OCI-LY7 (cell line): ENCODE measurements at regions of chr7 and their contacts with region 1.

Region 1: DNA sequence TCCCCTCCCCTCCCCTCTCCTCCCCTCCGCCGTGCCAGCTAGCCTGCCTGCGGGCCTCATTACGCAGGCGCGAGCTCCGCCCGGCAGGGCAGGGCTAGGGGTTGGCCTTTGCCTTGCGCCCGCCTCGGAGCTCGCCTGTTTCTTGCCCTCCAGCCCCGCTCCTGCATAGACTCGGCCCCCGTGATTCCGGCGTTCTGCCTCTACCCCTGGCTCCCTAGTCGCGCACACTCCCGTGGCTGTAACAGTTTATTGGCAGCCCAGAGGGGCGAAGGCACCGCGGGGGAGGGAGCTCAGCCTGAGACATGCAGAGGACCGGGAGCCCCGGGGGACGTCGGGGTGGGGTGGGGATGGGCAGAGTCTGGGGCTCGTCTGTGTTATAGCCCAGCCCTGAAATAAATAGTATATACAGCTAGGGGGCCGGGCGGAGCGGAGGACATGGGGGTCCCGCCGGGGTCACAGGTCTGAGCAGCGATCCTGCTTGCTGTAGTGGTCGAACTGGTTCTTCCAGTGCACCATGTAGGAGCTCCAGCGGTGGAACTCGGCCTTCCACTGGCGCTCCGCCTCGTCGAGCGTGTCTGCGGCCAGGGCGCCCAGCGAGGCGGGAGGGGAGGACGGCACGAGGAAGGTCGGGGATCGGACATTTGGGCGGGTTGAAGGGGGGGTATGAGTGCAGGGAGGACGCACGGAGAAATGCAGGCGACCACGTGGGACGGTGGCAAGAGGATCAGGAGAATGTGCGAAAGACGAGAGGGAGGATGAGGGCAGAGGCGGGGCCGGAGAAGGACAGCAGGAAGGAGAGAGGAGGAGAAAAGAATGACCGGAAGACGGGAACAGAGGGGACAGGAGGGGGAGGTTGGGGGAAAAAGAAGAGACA is 483 bp upstream of the UFSP1 start:
- DNase-seq: peak; percentile 94
- H3K4me3 ChIP-seq: peak overlapping the region; percentile 61
- H3K27ac ChIP-seq: peak overlapping the region; percentile 30
- H3K4me1 ChIP-seq: peaks cover 43% of the 10 kb centered on the region
- CTCF ChIP-seq: no peak

Region 2: DNA sequence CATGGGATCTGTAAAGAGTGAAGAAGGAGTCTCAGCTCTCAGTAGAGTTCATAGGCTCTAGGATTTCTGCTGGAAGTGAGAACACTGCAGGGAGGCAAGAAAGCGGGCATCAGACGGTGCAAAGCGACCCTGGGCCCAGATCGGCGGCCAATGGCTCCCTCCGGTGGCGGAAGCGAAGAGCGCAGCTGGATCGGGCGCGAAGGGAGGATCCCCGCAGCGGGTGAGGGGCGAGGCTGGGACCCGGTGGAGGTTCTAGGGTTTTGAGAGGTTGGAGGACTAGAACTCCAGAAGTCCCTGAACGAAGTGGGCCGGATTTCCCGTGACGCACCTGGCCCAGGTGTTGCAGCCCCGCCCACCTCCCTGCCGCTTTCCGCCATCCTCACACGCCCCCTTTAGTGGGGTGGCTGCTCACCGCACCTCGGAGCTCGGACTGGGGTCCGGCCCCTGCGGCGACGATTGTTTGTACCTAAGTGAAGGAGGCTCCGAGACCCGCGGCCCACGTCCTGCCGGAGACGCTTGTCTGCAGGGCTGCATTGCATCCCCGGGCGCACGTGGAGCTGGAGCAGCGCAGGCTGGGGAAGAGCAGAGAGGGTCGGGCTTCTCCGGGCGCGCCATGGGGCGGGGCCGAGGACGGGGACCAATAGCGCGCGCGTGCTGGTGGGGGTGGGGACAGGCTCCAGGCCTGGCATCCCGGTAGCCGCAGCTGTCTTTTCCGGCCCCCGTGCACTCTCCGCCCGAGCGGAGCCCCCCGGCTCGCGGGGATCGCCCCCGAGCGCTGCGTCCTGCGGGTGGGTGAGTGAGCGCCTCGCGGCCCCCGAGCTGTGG is 37.7 kb before region 1 on chr7 and contains the start of gene SLC12A9:
- CTCF ChIA-PET with region 1: interaction called, 5 read pairs
- POLR2A ChIA-PET with region 1: interaction called, 3 read pairs
- intact Hi-C with region 1: loop called (anchors 1 kb)
- DNase-seq: peak; percentile 90
- H3K4me3 ChIP-seq: peak within 1 kb of the TSS; percentile 85
- H3K27ac ChIP-seq: peak within 1 kb of the TSS; percentile 45
- H3K4me1 ChIP-seq: peaks cover 15% of the 10 kb centered on the region
- CTCF ChIP-seq: peak; percentile 95
- total RNA-seq, gene SLC12A9: 15.7 and 17.0 TPM in 2 replicates

Region 3: GRCh38 chr7:101031082-101031481 is 141.1 kb after region 1 on chr7:
- CTCF ChIA-PET with region 1: interaction called, 14 read pairs
- POLR2A ChIA-PET with region 1: no interaction called
- intact Hi-C with region 1: no loop called
- DNase-seq: no peak
- H3K4me3 ChIP-seq: no peak overlapping the region
- H3K27ac ChIP-seq: no peak overlapping the region
- H3K4me1 ChIP-seq: no peaks in the 10 kb centered on the region
- CTCF ChIP-seq: no peak

Region 4: DNA sequence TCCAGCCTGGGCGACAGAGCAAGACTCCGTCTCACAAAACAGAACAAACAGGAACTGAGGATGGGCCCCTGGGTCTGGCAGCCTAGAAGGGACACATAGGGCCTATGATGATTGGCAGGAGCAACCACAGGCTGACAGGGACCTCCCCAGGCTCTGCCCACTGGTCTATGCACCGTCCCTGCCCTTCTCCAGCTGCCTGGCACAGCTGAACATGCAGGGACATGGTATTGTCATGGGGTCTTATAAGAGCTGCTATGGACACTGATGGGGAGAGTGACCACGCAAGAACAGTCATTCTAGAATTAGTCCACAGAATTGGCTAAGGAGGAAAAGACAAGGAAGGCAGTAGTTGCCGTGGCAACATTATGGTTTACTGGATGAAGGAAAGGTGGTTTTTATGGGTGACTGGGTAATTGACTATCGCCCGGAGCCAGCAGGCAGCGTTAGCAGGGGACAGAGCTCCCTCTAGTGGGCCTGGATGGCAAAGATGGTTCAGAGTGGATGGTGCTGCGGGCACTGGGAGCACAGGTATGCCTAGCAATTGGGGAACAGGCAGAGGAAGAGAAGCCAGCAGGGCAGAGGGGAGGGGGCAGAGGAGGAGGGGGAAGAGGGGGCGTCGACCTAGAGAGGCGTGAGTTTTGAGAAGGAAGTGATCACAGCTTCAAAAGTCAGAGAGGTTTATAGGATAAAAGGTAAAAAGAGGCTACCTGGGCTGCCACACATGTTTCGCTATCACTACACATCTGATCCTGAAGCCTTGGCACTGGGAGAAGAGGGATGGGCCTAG is 187.5 kb after region 1 on chr7:
- CTCF ChIA-PET with region 1: interaction called, 4 read pairs
- POLR2A ChIA-PET with region 1: no interaction called
- intact Hi-C with region 1: loop called (anchors 5 kb)
- DNase-seq: peak; percentile 77
- H3K4me3 ChIP-seq: no peak overlapping the region
- H3K27ac ChIP-seq: no peak overlapping the region
- H3K4me1 ChIP-seq: peaks cover 3% of the 10 kb centered on the region
- CTCF ChIP-seq: peak; percentile 95

Region 5: GRCh38 chr7:101128040-101128794 is 238.2 kb after region 1 on chr7:
- CTCF ChIA-PET with region 1: no interaction called
- POLR2A ChIA-PET with region 1: no interaction called
- intact Hi-C with region 1: no loop called
- DNase-seq: no peak
- H3K4me3 ChIP-seq: no peak overlapping the region
- H3K27ac ChIP-seq: no peak overlapping the region
- H3K4me1 ChIP-seq: peaks cover 23% of the 10 kb centered on the region
- CTCF ChIP-seq: no peak

Region 6: DNA sequence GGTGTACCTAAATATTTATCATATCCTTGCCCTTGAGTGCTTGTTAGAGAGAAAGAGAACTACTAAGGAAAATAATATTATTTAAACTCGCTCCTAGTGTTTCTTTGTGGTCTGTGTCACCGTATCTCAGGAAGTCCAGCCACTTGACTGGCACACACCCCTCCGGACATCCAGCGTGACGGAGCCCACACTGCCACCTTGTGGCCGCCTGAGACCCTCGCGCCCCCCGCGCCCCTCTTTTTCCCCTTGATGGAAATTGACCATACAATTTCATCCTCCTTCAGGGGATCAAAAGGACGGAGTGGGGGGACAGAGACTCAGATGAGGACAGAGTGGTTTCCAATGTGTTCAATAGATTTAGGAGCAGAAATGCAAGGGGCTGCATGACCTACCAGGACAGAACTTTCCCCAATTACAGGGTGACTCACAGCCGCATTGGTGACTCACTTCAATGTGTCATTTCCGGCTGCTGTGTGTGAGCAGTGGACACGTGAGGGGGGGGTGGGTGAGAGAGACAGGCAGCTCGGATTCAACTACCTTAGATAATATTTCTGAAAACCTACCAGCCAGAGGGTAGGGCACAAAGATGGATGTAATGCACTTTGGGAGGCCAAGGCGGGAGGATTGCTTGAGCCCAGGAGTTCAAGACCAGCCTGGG is 248.3 kb after region 1 on chr7:
- CTCF ChIA-PET with region 1: no interaction called
- POLR2A ChIA-PET with region 1: no interaction called
- intact Hi-C with region 1: loop called (anchors 2 kb)
- DNase-seq: peak; percentile 55
- H3K4me3 ChIP-seq: peak overlapping the region; percentile 22
- H3K27ac ChIP-seq: no peak overlapping the region
- H3K4me1 ChIP-seq: peaks cover 8% of the 10 kb centered on the region
- CTCF ChIP-seq: peak; percentile 94